Naive thymus-derived CD4-positive, alpha-beta T cell (primary cell): ENCODE measurements at regions of chr12 and their contacts with region 1.

Region 1: GRCh38 chr12:66169221-66170170 is at the start of gene TMBIM4:
- DNase-seq: peak; percentile 68 to 91 (median 86)
- ATAC-seq: peak; percentile 85
- H3K4me3 ChIP-seq: peak within 1 kb of the TSS; percentile 80
- H3K4me3 Mint-ChIP-seq: peak within 1 kb of the TSS; percentile 89 to 100 (median 95)
- H3K27ac ChIP-seq: peak within 1 kb of the TSS; percentile 97
- H3K27ac Mint-ChIP-seq: peak within 1 kb of the TSS; percentile 94 to 98 (median 97)
- H3K4me1 ChIP-seq: peaks cover 10 to 24% of the 10 kb centered on the region in 2 donors
- H3K4me1 Mint-ChIP-seq: peaks cover 38 to 62% (median 52%) of the 10 kb centered on the region in 7 donors
- H3K27me3 ChIP-seq: no peaks in the 10 kb centered on the region
- H3K27me3 Mint-ChIP-seq: no peaks in the 10 kb centered on the region
- total RNA-seq, gene TMBIM4: 38.6 to 88.0 (median 79.8) TPM

Region 2: DNA sequence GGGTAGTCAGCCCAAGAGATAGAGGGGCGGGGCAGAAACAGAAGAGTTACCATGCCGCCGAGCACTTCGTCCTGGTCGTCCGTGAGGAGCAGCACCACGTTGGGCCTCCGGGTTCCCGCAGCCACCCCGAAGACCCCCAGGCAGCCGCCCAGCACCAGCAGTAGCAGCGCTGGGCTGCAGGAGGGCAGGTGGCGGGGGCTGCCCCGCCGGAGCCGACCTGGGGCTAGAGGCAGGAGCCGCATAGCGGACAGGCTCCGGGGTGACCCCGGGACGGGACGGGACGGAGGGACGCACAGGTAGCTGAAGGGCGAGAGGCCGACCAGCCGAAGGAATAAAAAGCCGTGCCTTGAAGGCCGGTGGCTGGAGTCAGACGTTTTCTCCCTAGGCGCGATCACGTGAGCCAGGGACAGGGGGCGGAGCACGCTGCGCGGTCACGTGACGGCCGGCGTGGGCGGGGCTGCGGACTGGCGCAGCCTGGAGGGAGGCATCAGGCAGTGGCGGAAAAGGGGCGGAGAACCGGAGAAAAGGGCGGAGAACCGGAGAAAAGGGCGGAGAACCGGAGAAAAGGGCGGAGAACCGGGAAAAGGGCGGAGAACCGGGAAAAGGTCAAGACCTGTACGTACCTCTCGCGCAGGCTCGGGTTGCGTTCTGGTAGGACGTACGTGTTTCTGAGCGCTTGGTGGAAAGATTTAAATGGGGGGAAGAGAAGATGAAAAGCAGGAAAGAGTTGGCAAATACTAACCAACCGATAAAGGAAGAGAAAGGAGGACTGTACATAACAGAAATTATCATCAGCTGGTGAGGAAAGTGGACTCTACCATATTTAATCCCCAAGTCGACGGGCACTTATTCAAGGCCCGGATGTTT is 1410.2 kb before region 1 on chr12 and contains the start of gene GNS:
- CTCF ChIA-PET with region 1: no interaction called
- POLR2A ChIA-PET with region 1: no interaction called
- intact Hi-C with region 1: loop called in 1 of 2 experiments (anchors 1 kb)
- DNase-seq: peak; percentile 81 to 99 (median 86)
- ATAC-seq: peak; percentile 96
- H3K4me3 ChIP-seq: peak within 1 kb of the TSS; percentile 98
- H3K4me3 Mint-ChIP-seq: peak within 1 kb of the TSS; percentile 86 to 99 (median 96)
- H3K27ac ChIP-seq: peak within 1 kb of the TSS; percentile 77
- H3K27ac Mint-ChIP-seq: peak within 1 kb of the TSS; percentile 78 to 96 (median 91)
- H3K4me1 ChIP-seq: peaks cover 0 to 21% of the 10 kb centered on the region in 2 donors
- H3K4me1 Mint-ChIP-seq: peaks cover 17 to 60% (median 48%) of the 10 kb centered on the region in 7 donors
- H3K27me3 ChIP-seq: no peaks in the 10 kb centered on the region
- H3K27me3 Mint-ChIP-seq: peaks cover 0 to 4% (median 0%) of the 10 kb centered on the region in 5 donors
- total RNA-seq, gene GNS: 24.4 to 62.8 (median 35.2) TPM

Region 3: DNA sequence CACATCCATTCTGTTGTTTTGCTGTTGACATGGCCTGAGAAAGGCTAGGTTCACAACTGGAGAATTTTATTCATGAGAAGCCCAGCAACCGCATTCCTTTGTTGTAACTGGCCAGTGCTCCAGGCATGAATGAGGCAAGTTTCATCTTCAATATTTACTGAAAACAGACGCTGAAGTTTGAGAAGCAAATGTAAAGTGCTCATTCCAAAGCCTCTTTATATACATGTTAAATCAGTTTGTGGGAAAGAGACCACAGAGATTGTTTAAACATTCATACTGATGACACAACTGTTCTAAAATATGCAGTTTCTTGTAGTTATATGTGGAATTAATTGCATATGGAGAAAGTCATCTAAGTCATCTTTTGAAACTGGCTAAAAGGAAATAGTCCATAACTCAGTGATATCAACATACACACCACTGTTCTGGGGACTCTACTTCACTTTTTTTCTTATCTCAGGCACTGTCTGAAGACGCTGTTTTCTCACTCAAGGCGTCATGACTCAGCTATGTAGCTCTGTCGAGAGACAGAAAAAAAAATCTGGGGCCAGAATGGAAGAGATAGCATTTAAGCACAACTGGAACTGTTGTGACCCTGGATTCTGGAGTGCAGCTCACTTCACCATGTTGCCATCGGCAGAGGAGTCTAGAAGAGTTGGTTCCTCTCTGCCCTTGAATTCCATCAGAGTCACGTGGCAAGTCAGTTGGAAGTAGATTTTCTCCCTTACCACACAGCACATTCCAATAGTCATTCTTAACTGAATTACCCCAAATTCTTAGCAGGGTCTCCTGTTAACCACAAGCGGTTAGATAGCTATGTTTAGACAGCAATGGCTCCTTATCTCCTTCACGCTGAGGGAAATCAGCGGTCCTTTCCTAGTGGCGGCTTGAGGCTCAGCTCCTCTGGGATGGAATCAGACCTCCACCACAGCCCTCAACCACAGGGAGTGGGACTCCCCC is 603.6 kb before region 1 on chr12:
- CTCF ChIA-PET with region 1: no interaction called
- POLR2A ChIA-PET with region 1: no interaction called
- intact Hi-C with region 1: no loop called
- DNase-seq: no peak
- ATAC-seq: peak; percentile 53
- H3K4me3 ChIP-seq: no peak overlapping the region
- H3K4me3 Mint-ChIP-seq: no peak overlapping the region
- H3K27ac ChIP-seq: no peak overlapping the region
- H3K27ac Mint-ChIP-seq: no peak overlapping the region
- H3K4me1 ChIP-seq: no peaks in the 10 kb centered on the region
- H3K4me1 Mint-ChIP-seq: no peaks in the 10 kb centered on the region
- H3K27me3 ChIP-seq: no peaks in the 10 kb centered on the region
- H3K27me3 Mint-ChIP-seq: peaks cover 8 to 45% (median 38%) of the 10 kb centered on the region in 5 donors

Region 4: GRCh38 chr12:66092559-66093269 is 76.8 kb before region 1 on chr12:
- CTCF ChIA-PET with region 1: no interaction called
- POLR2A ChIA-PET with region 1: no interaction called
- intact Hi-C with region 1: no loop called
- DNase-seq: no peak
- ATAC-seq: peak; percentile 60
- H3K4me3 ChIP-seq: no peak overlapping the region
- H3K4me3 Mint-ChIP-seq: no peak overlapping the region
- H3K27ac ChIP-seq: no peak overlapping the region
- H3K27ac Mint-ChIP-seq: no peak overlapping the region
- H3K4me1 ChIP-seq: no peaks in the 10 kb centered on the region
- H3K4me1 Mint-ChIP-seq: peaks cover 0 to 2% (median 0%) of the 10 kb centered on the region in 7 donors
- H3K27me3 ChIP-seq: no peaks in the 10 kb centered on the region
- H3K27me3 Mint-ChIP-seq: peaks cover 17 to 32% (median 18%) of the 10 kb centered on the region in 5 donors

Region 5: DNA sequence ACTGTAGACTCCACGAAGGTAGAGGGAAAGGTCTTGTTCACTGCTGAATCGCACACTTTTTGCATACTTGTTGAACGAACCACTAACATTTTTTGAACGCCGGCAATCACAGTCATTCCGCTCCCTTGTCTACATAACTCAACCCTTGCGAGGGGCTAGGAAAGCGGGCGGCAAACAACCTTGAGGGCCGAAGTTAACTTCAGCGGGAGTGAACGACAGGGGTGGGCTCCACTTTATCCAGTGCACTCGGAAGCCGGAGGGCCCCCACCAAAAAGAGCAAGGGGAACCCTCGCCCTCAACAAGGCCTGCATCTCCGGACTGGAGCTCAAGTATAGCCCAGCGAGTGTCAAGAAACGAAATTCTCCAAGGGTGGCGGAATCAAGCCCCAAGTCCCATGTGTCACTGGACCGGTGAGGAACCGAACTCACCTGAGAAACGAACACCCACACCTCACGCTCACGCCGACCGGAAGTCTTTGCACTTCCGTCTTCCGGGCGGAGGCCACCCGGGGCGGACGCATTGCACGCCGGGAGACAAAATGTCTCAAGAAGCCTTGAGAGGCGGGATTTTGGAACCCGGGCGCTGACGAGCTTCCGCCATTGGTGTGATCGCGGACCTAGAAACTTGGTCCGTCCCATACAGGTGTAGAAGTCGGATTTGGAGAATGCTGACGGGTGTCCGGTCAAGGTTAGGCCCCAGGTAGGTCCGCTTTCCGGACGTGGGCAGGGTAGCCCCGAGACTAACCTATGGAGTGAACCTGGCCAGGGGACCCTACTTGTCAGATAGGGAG is 39.0 kb before region 1 on chr12 and contains the start of gene LLPH:
- CTCF ChIA-PET with region 1: interaction called, 11 read pairs
- POLR2A ChIA-PET with region 1: interaction called, 56 read pairs
- intact Hi-C with region 1: loop called (anchors 1 kb)
- DNase-seq: peak; percentile 72 to 88 (median 86)
- ATAC-seq: peak; percentile 97
- H3K4me3 ChIP-seq: peak within 1 kb of the TSS; percentile 99
- H3K4me3 Mint-ChIP-seq: peak within 1 kb of the TSS; percentile 92 to 98 (median 97)
- H3K27ac ChIP-seq: peak within 1 kb of the TSS; percentile 87
- H3K27ac Mint-ChIP-seq: peak within 1 kb of the TSS; percentile 95 to 99 (median 97)
- H3K4me1 ChIP-seq: peaks cover 19 to 23% of the 10 kb centered on the region in 2 donors
- H3K4me1 Mint-ChIP-seq: peaks cover 37 to 76% (median 63%) of the 10 kb centered on the region in 7 donors
- H3K27me3 ChIP-seq: no peaks in the 10 kb centered on the region
- H3K27me3 Mint-ChIP-seq: no peaks in the 10 kb centered on the region
- total RNA-seq, gene LLPH: 14.7 to 29.1 (median 28.4) TPM

Region 6: DNA sequence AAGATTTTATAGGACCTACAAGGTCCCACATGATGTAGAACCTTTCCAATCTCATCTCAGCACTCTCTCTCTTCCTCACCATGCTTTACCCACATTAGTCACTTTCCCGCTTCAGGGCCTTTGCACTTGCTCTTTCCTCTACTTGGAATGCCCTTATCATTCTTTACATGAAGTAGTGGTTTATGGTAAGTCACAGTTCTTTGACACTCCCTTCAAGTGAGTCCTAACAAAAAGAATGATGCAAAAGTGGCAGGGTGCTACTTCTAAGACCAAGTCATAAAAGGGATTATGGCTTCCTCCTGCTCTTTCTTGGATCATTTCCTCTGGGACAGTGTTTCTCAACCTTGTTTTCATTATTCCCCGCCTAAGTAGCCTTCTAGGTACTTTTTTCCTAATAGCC is 12.8 kb before region 1 on chr12:
- CTCF ChIA-PET with region 1: interaction called, 4 read pairs
- POLR2A ChIA-PET with region 1: interaction called, 26 read pairs
- intact Hi-C with region 1: no loop called
- DNase-seq: no peak
- ATAC-seq: no peak
- H3K4me3 ChIP-seq: no peak overlapping the region
- H3K4me3 Mint-ChIP-seq: peak overlapping the region in 1 of 10 donors; percentile 2
- H3K27ac ChIP-seq: no peak overlapping the region
- H3K27ac Mint-ChIP-seq: peak overlapping the region in 8 of 9 donors; percentile 0 to 58 (median 26)
- H3K4me1 ChIP-seq: peaks cover 0 to 8% of the 10 kb centered on the region in 2 donors
- H3K4me1 Mint-ChIP-seq: peaks cover 9 to 75% (median 57%) of the 10 kb centered on the region in 7 donors
- H3K27me3 ChIP-seq: no peaks in the 10 kb centered on the region
- H3K27me3 Mint-ChIP-seq: no peaks in the 10 kb centered on the region

Region 7: GRCh38 chr12:66235626-66236281 is 66.3 kb after region 1 on chr12:
- CTCF ChIA-PET with region 1: no interaction called
- POLR2A ChIA-PET with region 1: no interaction called
- intact Hi-C with region 1: loop called (anchors 2 to 5 kb)
- DNase-seq: no peak
- ATAC-seq: no peak
- H3K4me3 ChIP-seq: no peak overlapping the region
- H3K4me3 Mint-ChIP-seq: peak overlapping the region in 9 of 10 donors; percentile 37 to 74 (median 53)
- H3K27ac ChIP-seq: no peak overlapping the region
- H3K27ac Mint-ChIP-seq: no peak overlapping the region
- H3K4me1 ChIP-seq: no peaks in the 10 kb centered on the region
- H3K4me1 Mint-ChIP-seq: peaks cover 0 to 9% (median 4%) of the 10 kb centered on the region in 7 donors
- H3K27me3 ChIP-seq: peaks cover 0 to 6% of the 10 kb centered on the region in 2 donors
- H3K27me3 Mint-ChIP-seq: peaks cover 29 to 55% (median 33%) of the 10 kb centered on the region in 5 donors

Region 8: DNA sequence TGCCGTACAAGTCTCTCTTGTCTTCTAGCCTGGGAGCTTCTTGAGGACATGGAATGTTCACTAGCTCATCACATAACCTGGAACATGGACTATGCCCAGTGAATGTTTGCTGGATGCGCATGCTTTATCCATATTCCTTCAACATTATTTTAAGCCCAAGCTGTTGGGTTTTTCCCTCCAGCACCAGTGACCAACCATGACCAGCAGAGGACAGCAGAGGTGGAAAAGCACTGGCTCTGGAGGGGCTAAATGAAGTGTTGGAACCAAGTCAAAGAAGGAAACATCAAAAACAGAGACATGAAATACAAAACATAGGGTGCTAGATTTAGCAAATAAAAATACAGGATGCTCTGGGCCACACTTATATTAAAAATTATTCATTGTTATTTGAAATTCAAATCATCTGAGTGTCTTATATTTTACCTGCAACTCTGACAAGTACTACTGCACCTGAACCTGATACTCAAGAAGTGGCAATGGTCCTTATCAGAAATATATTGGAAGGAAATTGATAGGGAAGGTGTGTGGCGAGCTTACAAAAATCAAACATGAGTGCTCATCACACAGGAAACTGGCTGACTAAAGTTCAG is 109.7 kb after region 1 on chr12:
- CTCF ChIA-PET with region 1: no interaction called
- POLR2A ChIA-PET with region 1: no interaction called
- intact Hi-C with region 1: no loop called
- DNase-seq: peak in 6 of 9 donors; percentile 33 to 58 (median 52)
- ATAC-seq: peak; percentile 76
- H3K4me3 ChIP-seq: no peak overlapping the region
- H3K4me3 Mint-ChIP-seq: peak overlapping the region in 8 of 10 donors; percentile 2 to 67 (median 20)
- H3K27ac ChIP-seq: no peak overlapping the region
- H3K27ac Mint-ChIP-seq: peak overlapping the region in 4 of 9 donors; percentile 22 to 78 (median 49)
- H3K4me1 ChIP-seq: peaks cover 17 to 38% of the 10 kb centered on the region in 2 donors
- H3K4me1 Mint-ChIP-seq: peaks cover 33 to 70% (median 52%) of the 10 kb centered on the region in 7 donors
- H3K27me3 ChIP-seq: no peaks in the 10 kb centered on the region
- H3K27me3 Mint-ChIP-seq: no peaks in the 10 kb centered on the region